H1 (cell line): ENCODE measurements at regions of chr11 and their contacts with region 1.

Region 1: GRCh38 chr11:114262681-114263512 is 33.3 kb upstream of the NNMT start:
- DNase-seq: no peak
- H3K4me3 ChIP-seq: no peak overlapping the region
- H3K27ac ChIP-seq: no peak overlapping the region
- H3K4me1 ChIP-seq: no peaks in the 10 kb centered on the region; a peak in 3 of 7 replicates
- H3K27me3 ChIP-seq: no peaks in the 10 kb centered on the region
- CTCF ChIP-seq: peak; percentile 62 to 80 (median 64)
- EP300 ChIP-seq: no peak
- POLR2A ChIP-seq: no peak
- RAD21 ChIP-seq: peak; percentile 88 to 91

Region 2: GRCh38 chr11:113806406-113806805 is 456.5 kb before region 1 on chr11:
- CTCF ChIA-PET with region 1: interaction called, 22 read pairs
- POLR2A ChIA-PET with region 1: no interaction called
- DNase-seq: peak in 1 of 2 experiments; percentile 70
- H3K4me3 ChIP-seq: no peak overlapping the region
- H3K27ac ChIP-seq: no peak overlapping the region
- H3K4me1 ChIP-seq: no peaks in the 10 kb centered on the region
- H3K27me3 ChIP-seq: no peaks in the 10 kb centered on the region
- CTCF ChIP-seq: peak; percentile 69 to 87 (median 70)
- EP300 ChIP-seq: no peak
- POLR2A ChIP-seq: no peak
- RAD21 ChIP-seq: peak; percentile 62 to 73

Region 3: DNA sequence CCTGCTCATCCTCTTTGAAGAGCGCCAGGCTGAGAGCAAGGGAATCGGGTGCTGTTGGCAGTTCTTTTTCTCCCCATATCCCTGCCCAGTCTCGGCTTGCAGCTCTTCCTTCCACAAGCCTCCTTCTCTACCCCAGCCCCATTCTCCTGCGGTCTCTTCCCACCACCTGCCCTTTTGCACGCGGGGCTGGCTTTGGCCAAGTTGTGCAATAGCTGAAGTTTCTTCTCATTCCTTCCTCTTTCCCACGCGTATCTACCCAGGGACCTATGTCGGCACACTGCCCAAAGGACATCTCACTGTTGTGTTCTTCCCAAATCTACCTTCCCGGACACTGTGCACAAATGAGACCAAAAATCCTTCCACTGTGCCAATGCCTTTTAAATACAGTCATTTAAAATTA is 310.3 kb before region 1 on chr11:
- CTCF ChIA-PET with region 1: interaction called, 19 read pairs
- POLR2A ChIA-PET with region 1: no interaction called
- DNase-seq: no peak
- H3K4me3 ChIP-seq: no peak overlapping the region
- H3K27ac ChIP-seq: no peak overlapping the region
- H3K4me1 ChIP-seq: peaks cover 2 to 11% (median 6%) of the 10 kb centered on the region in 4 experiments
- H3K27me3 ChIP-seq: peaks cover 0 to 2% (median 0%) of the 10 kb centered on the region in 4 experiments; a peak in 2 of 7 replicates
- CTCF ChIP-seq: no peak
- EP300 ChIP-seq: no peak
- POLR2A ChIP-seq: no peak
- RAD21 ChIP-seq: no peak

Region 4: GRCh38 chr11:114026355-114026754 is 236.5 kb before region 1 on chr11:
- CTCF ChIA-PET with region 1: interaction called, 164 read pairs
- POLR2A ChIA-PET with region 1: no interaction called
- DNase-seq: peak in 1 of 2 experiments; percentile 10
- H3K4me3 ChIP-seq: no peak overlapping the region
- H3K27ac ChIP-seq: no peak overlapping the region
- H3K4me1 ChIP-seq: no peaks in the 10 kb centered on the region
- H3K27me3 ChIP-seq: peaks cover 0 to 2% (median 0%) of the 10 kb centered on the region in 4 experiments; a peak in 1 of 7 replicates
- CTCF ChIP-seq: peak in 2 of 3 experiments; percentile 48 to 68; a peak in 3 of 4 replicates
- EP300 ChIP-seq: no peak
- POLR2A ChIP-seq: no peak
- RAD21 ChIP-seq: peak; percentile 29 to 45; a peak in 3 of 4 replicates

Region 5: DNA sequence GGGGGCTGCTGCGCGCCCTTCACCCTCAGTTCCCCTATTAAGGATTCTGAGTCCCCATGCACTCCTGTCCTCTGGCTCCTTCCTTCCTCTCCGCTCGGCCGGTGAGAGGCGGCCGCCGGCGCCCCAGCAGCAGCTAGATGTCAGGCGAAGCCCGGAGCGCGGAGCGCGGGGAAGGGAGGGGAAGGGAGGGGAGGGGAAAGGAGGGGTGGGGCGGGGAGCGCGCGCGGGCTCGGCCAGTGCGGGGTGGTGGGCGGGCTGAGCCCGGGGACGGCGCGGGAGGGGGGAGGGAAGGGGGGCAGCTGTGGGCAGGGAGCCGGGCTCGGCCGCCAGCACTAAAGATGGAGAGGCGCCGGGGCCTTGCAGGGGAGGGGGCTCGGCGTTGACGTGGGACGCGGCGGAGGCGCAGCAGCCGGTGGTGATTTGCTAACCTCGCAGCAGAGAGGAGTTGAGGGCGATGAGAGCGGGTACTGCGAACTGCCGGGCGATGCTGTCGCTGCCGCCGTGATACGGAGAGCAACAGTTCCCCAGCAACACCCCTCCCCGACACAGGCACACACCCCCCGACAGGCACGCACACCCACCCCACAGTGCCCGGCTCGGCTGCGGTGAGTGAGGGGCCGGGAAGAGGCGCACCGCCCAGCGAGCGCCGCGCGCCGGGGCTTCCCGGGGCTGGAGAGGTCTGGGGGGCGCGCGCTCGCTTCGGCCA is 203.5 kb before region 1 on chr11 and contains the start of gene ZBTB16:
- CTCF ChIA-PET with region 1: interaction called, 17 read pairs
- POLR2A ChIA-PET with region 1: no interaction called
- DNase-seq: peak; percentile 61 to 82
- H3K4me3 ChIP-seq: peak within 1 kb of the TSS; percentile 41 to 80 (median 56)
- H3K27ac ChIP-seq: no peak within 1 kb of the TSS
- H3K4me1 ChIP-seq: peaks cover 0 to 24% (median 12%) of the 10 kb centered on the region in 4 experiments; a peak in 6 of 7 replicates
- H3K27me3 ChIP-seq: peaks cover 54 to 83% (median 77%) of the 10 kb centered on the region in 4 experiments
- CTCF ChIP-seq: 0 out of 4 replicates have a peak, but pooled peaks of 1 of the 3 experiments have one; percentile 14
- EP300 ChIP-seq: no peak
- POLR2A ChIP-seq: no peak
- RAD21 ChIP-seq: peak; percentile 5 to 33; a peak in 2 of 4 replicates
- total RNA-seq, gene ZBTB16: 0.25 and 0.61 TPM in 2 replicates

Region 6: GRCh38 chr11:114128399-114128798 is 134.5 kb before region 1 on chr11:
- CTCF ChIA-PET with region 1: no interaction called
- POLR2A ChIA-PET with region 1: no interaction called
- DNase-seq: no peak
- H3K4me3 ChIP-seq: no peak overlapping the region
- H3K27ac ChIP-seq: no peak overlapping the region
- H3K4me1 ChIP-seq: no peaks in the 10 kb centered on the region
- H3K27me3 ChIP-seq: no peaks in the 10 kb centered on the region
- CTCF ChIP-seq: no peak
- EP300 ChIP-seq: no peak
- POLR2A ChIP-seq: no peak
- RAD21 ChIP-seq: no peak

Region 7: GRCh38 chr11:114187173-114187572 is 75.7 kb before region 1 on chr11:
- CTCF ChIA-PET with region 1: interaction called, 109 read pairs
- POLR2A ChIA-PET with region 1: no interaction called
- DNase-seq: no peak
- H3K4me3 ChIP-seq: no peak overlapping the region
- H3K27ac ChIP-seq: no peak overlapping the region
- H3K4me1 ChIP-seq: peaks cover 0 to 2% (median 0%) of the 10 kb centered on the region in 4 experiments; a peak in 1 of 7 replicates
- H3K27me3 ChIP-seq: no peaks in the 10 kb centered on the region
- CTCF ChIP-seq: no peak
- EP300 ChIP-seq: no peak
- POLR2A ChIP-seq: no peak
- RAD21 ChIP-seq: no peak

Region 8: GRCh38 chr11:114233755-114234154 is 29.1 kb before region 1 on chr11:
- CTCF ChIA-PET with region 1: interaction called, 256 read pairs
- POLR2A ChIA-PET with region 1: no interaction called
- DNase-seq: no peak
- H3K4me3 ChIP-seq: no peak overlapping the region
- H3K27ac ChIP-seq: no peak overlapping the region
- H3K4me1 ChIP-seq: peaks cover 0 to 6% (median 2%) of the 10 kb centered on the region in 4 experiments; a peak in 4 of 7 replicates
- H3K27me3 ChIP-seq: peaks cover 0 to 13% (median 5%) of the 10 kb centered on the region in 4 experiments; a peak in 3 of 7 replicates
- CTCF ChIP-seq: no peak
- EP300 ChIP-seq: no peak
- POLR2A ChIP-seq: no peak
- RAD21 ChIP-seq: no peak